Breast epithelium (tissue), 4 donors: ENCODE measurements at regions of chr14 and their contacts with region 1.

Region 1: DNA sequence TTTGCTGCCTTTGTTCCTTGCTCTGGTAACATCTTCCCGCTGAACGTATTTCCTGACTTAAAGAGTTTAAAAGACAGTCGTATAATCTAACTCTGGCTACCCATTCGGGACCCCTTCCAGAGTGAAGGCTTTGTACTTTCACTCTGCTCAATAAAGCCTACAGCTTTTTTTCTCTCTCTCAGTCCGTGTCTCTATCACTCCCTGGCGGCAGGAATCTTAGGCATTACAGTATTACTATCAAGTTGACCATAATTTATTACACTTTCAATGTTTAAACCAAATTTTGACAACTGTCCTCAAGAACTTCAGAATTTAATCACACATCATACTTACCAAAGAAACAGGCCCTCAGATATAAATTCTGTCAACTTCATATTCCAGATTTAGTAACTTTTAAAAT is 967.9 kb downstream of the FSCB start:
- DNase-seq: no peak
- H3K4me3 ChIP-seq: peak overlapping the region in 2 of 3 donors; percentile 3 to 30
- H3K27ac ChIP-seq: no peak overlapping the region
- H3K4me1 ChIP-seq: no peaks in the 10 kb centered on the region
- H3K27me3 ChIP-seq: no peaks in the 10 kb centered on the region
- CTCF ChIP-seq: peak in 2 of 3 donors; percentile 33 to 43
- POLR2A ChIP-seq: no peak

Region 2: GRCh38 chr14:43204813-43205212 is 334.4 kb before region 1 on chr14:
- intact Hi-C with region 1: loop called (anchors 5 kb)
- DNase-seq: no peak
- H3K4me3 ChIP-seq: no peak overlapping the region
- H3K27ac ChIP-seq: no peak overlapping the region
- H3K4me1 ChIP-seq: no peaks in the 10 kb centered on the region
- H3K27me3 ChIP-seq: no peaks in the 10 kb centered on the region
- CTCF ChIP-seq: no peak
- POLR2A ChIP-seq: no peak

Region 3: GRCh38 chr14:43956741-43957140 is 417.5 kb after region 1 on chr14:
- intact Hi-C with region 1: loop called (anchors 5 kb)
- DNase-seq: no peak
- H3K4me3 ChIP-seq: no peak overlapping the region
- H3K27ac ChIP-seq: no peak overlapping the region
- H3K4me1 ChIP-seq: no peaks in the 10 kb centered on the region
- H3K27me3 ChIP-seq: no peaks in the 10 kb centered on the region
- CTCF ChIP-seq: no peak
- POLR2A ChIP-seq: no peak